ENCODE measurements at regions of chr12 and their contacts with region 1.

Region 1: GRCh38 chr12:44574586-44574985 is 301.5 kb downstream of the NELL2 start:
- DNase-seq: peak in 1 of 2 experiments; percentile 12
- H3K4me3 ChIP-seq: no peak overlapping the region
- H3K4me3 Mint-ChIP-seq: peak overlapping the region; percentile 12
- H3K27ac Mint-ChIP-seq: peak overlapping the region; percentile 34
- H3K4me1 ChIP-seq: peaks cover 20% of the 10 kb centered on the region
- H3K4me1 Mint-ChIP-seq: peaks cover 18% of the 10 kb centered on the region
- H3K27me3 ChIP-seq: no peaks in the 10 kb centered on the region
- H3K27me3 Mint-ChIP-seq: no peaks in the 10 kb centered on the region
- CTCF ChIP-seq: no peak

Region 2: DNA sequence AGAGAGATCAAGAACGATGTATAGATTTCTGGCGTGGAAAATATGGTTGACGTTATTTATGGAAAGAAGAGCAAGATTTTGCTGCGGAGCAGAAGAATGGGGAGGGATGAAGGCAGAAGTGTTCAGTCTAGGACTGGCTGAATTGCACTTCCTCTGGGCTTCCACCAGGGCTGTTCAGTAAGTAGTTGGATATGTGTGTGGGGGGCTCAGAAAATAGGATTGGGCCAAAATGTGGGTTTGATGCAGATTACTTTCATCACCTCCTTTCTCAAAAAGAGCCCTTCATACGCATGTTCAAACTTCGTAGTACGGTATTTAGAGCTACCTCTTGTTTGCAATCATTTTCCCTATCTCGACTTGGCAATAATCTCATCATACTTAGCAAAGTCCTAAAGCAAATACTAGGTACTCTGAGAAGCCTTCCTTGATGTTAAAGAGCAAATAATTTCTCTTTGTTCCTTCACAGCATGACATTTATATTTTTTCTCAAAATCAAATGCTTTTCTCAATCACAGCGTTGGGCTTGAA is 47.9 kb before region 1 on chr12:
- CTCF ChIA-PET with region 1: no interaction called
- POLR2A ChIA-PET with region 1: no interaction called
- intact Hi-C with region 1: loop called (anchors 2 kb)
- DNase-seq: no peak
- H3K4me3 ChIP-seq: no peak overlapping the region
- H3K4me3 Mint-ChIP-seq: peak overlapping the region; percentile 3
- H3K27ac Mint-ChIP-seq: peak overlapping the region; percentile 65
- H3K4me1 ChIP-seq: peaks cover 49% of the 10 kb centered on the region
- H3K4me1 Mint-ChIP-seq: peaks cover 21% of the 10 kb centered on the region
- H3K27me3 ChIP-seq: no peaks in the 10 kb centered on the region
- H3K27me3 Mint-ChIP-seq: no peaks in the 10 kb centered on the region
- CTCF ChIP-seq: peak; percentile 11 to 32